Mucosa of descending colon (tissue), 3 donors: ENCODE measurements at regions of chr16 and their contacts with region 1.

Region 1: GRCh38 chr16:106623-107324 is 28.7 kb downstream of the MPG start:
- DNase-seq: peak in 1 of 3 donors; percentile 73
- ATAC-seq: peak; percentile 92
- H3K4me3 ChIP-seq: no peak overlapping the region
- H3K4me1 ChIP-seq: no peaks in the 10 kb centered on the region
- CTCF ChIP-seq: peak; percentile 50

Region 2: GRCh38 chr16:180938-181667 is 74.3 kb after region 1 on chr16:
- intact Hi-C with region 1: loop called (anchors 5 kb)
- DNase-seq: peak; percentile 77 to 88 (median 83)
- ATAC-seq: peak; percentile 94
- H3K4me3 ChIP-seq: no peak overlapping the region
- H3K4me1 ChIP-seq: peaks cover 13% of the 10 kb centered on the region
- CTCF ChIP-seq: peak; percentile 99